Tibial artery (tissue), 4 donors: ENCODE measurements at regions of chr11 and their contacts with region 1.

Region 1: DNA sequence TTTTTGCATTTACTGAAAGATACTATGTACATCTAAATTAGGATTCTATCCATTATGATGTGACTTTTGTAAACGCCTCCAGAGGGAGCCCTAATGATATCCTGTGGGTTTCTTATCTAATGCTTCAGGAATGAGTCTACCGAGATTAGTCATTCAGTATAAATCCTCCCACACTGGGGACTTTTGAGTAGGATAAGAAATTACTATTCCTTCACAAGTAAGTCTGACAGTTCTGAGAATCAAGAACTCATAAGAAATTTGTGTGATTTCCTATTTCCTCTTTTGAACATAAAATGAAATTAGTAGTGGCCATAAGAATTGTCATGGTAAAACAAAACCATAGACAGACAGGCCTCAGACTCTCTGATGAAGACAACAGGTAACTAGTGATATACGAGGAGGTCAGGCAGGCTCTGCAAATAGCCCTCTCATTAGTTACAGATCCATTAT is 10.0 kb upstream of the OR5M1 start:
- DNase-seq: no peak
- H3K4me3 ChIP-seq: no peak overlapping the region
- H3K27ac ChIP-seq: no peak overlapping the region
- H3K4me1 ChIP-seq: peaks cover 0 to 5% (median 0%) of the 10 kb centered on the region in 4 donors
- H3K27me3 ChIP-seq: no peaks in the 10 kb centered on the region
- CTCF ChIP-seq: peak; percentile 36 to 43

Region 2: DNA sequence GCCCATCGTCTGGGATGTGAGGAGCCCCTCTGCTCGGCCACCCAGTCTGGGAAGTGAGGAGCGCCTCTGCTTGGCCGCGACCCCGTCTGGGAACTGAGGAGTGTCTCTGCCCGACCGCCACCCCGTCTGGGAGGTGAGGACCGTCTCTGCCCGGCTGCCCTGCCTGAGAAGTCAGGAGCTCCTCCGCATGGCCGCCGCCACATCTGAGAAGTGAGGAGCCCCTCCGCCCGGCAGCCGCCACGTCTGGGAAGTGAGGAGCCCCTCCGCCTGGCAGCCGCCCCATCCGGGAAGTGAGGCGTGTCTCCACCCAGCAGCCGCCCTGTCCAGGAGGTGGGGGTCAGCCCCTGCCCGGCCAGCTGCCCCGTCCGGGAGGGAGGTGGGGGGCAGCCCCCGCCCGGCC is 127.7 kb before region 1 on chr11:
- intact Hi-C with region 1: no loop called
- DNase-seq: no peak
- H3K4me3 ChIP-seq: no peak overlapping the region
- H3K27ac ChIP-seq: no peak overlapping the region
- H3K4me1 ChIP-seq: no peaks in the 10 kb centered on the region
- H3K27me3 ChIP-seq: no peaks in the 10 kb centered on the region
- CTCF ChIP-seq: no peak

Region 3: GRCh38 chr11:56783448-56784041 is 158.9 kb after region 1 on chr11:
- intact Hi-C with region 1: loop called (anchors 10 kb)
- DNase-seq: no peak
- H3K4me3 ChIP-seq: no peak overlapping the region
- H3K27ac ChIP-seq: no peak overlapping the region
- H3K4me1 ChIP-seq: no peaks in the 10 kb centered on the region
- H3K27me3 ChIP-seq: peaks cover 0 to 5% of the 10 kb centered on the region in 2 donors
- CTCF ChIP-seq: peak; percentile 50 to 51